ENCODE measurements at regions of chr7 and their contacts with region 1.

Region 1: DNA sequence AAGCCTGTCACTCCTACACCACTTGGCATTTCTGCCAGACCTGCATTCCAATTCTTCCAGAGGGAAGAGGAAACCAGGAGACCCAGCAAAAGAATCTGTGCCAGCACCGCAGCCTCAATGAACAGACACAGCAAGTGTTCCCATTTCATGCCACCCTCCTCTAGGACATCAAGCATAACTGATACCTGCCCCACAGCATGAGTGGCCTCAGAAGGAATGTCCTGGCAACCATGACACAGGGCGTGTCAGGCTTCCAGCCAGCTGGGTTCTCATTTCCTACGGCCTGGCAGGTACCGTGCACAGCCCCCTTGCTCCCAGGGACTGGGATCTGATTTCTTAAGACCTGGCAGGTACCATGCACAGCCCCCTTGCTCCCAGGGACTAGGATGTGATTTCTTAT is 7.8 kb downstream of the MAD1L1 start:
- DNase-seq: peak; percentile 87
- ATAC-seq: peak; percentile 91
- H3K4me3 ChIP-seq: peak overlapping the region; percentile 46; the same call in 1 of the 2 replicates
- H3K27ac ChIP-seq: peak overlapping the region; percentile 93
- H3K4me1 ChIP-seq: peaks cover 27% of the 10 kb centered on the region
- H3K27me3 ChIP-seq: no peaks in the 10 kb centered on the region
- CTCF ChIP-seq: no peak

Region 2: GRCh38 chr7:2270061-2270460 is 45.1 kb after region 1 on chr7:
- CTCF ChIA-PET with region 1: no interaction called
- POLR2A ChIA-PET with region 1: interaction called, 13 read pairs
- intact Hi-C with region 1: no loop called
- DNase-seq: no peak
- ATAC-seq: peak; percentile 25; the same call in 1 of the 2 replicates
- H3K4me3 ChIP-seq: no peak overlapping the region
- H3K27ac ChIP-seq: peak overlapping the region; percentile 5; the same call in 1 of the 2 replicates
- H3K4me1 ChIP-seq: peaks cover 14% of the 10 kb centered on the region
- H3K27me3 ChIP-seq: no peaks in the 10 kb centered on the region
- CTCF ChIP-seq: no peak

Region 3: DNA sequence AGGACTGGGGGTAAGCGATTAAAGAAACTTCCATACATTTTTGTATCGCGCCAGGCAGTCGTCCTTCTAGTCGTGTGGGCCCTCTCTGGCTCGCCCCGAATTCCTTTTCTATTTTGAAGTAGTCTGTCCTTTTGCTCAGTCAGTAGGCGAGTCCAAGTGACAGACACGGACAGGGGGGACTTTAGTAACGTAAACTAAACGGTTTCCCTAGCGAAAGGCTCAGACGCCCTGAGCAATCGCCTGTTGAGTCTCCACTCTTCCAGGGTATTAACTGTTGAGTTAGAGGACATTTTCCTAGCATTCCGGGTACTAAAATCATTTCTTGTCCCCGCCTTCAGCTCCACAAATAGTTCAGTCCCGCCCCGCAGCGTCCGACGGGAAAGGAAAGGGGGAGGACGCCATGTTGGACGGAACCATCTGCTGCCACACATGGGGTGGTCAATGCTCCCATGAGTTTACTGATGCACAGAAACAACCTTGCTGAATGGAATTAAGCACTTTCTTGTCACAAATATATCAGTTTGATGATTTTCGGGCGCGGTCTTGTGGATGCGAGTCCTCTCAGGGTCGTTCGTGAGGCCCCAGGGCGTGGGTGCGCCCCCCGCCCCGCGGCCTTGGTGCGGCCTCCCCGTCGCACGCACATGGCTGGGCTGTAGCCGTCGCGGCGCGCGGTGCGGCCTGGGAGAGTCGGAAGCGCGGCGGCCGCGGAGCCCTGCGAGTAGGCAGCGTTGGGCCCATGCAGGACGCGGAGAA is 129.4 kb after region 1 on chr7 and contains the start of gene EIF3B:
- CTCF ChIA-PET with region 1: no interaction called
- POLR2A ChIA-PET with region 1: no interaction called
- intact Hi-C with region 1: loop called (anchors 5 kb)
- DNase-seq: peak; percentile 85
- ATAC-seq: peak; percentile 87
- H3K4me3 ChIP-seq: peak within 1 kb of the TSS; percentile 99
- H3K27ac ChIP-seq: peak within 1 kb of the TSS; percentile 94
- H3K4me1 ChIP-seq: peaks cover 25% of the 10 kb centered on the region
- H3K27me3 ChIP-seq: no peaks in the 10 kb centered on the region
- CTCF ChIP-seq: no peak
- total RNA-seq, gene EIF3B: 289 and 377 TPM in 2 replicates